ENCODE measurements at regions of chr4 and their contacts with region 1.

Region 1: GRCh38 chr4:109350125-109350524 is 47.7 kb upstream of the COL25A1 start:
- DNase-seq: no peak
- H3K27ac ChIP-seq: no peak overlapping the region
- CTCF ChIP-seq: no peak

Region 2: DNA sequence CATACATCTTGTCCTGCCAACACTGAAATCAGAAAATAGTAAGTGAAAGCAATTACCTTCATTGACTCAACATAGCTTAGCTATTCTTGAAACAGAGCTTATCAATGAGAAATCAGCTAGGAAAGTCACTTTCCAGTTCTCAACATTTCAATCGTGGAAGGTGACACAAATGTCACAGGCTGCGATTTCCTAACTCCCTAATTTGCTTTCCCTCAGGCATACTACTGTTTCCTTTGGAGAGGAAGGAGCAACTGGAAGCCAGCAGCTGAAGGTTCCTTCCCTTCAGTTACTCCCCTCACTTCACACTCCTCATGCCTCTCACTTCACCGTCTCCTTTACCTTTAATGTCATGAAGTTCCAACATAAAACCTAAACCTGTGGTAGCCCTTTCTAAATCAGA is 21.0 kb after region 1 on chr4:
- CTCF ChIA-PET with region 1: interaction called, 10 read pairs
- POLR2A ChIA-PET with region 1: no interaction called
- DNase-seq: no peak
- H3K27ac ChIP-seq: no peak overlapping the region
- CTCF ChIP-seq: no peak